ENCODE measurements at regions of chr2 and their contacts with region 1.

Region 1: GRCh38 chr2:31170071-31170698 is 31.9 kb upstream of the GALNT14 start:
- DNase-seq: peak; percentile 21
- ATAC-seq: peak; percentile 94
- H3K4me3 ChIP-seq: no peak overlapping the region
- H3K27ac ChIP-seq: no peak overlapping the region
- H3K4me1 ChIP-seq: no peaks in the 10 kb centered on the region
- H3K27me3 ChIP-seq: no peaks in the 10 kb centered on the region
- CTCF ChIP-seq: peak; percentile 93 to 97 (median 95)
- EP300 ChIP-seq: no peak
- POLR2A ChIP-seq: no peak
- RAD21 ChIP-seq: peak; percentile 85

Region 2: GRCh38 chr2:30862054-30862651 is 308.0 kb before region 1 on chr2:
- CTCF ChIA-PET with region 1: interaction called, 99 read pairs
- POLR2A ChIA-PET with region 1: no interaction called
- RAD21 ChIA-PET with region 1: interaction called, 61 read pairs
- SMC1A ChIA-PET with region 1: interaction called, 49 read pairs
- in situ Hi-C with region 1: loop called (anchors 10 kb)
- intact Hi-C with region 1: loop called (anchors 1 kb)
- DNase-seq: no peak
- ATAC-seq: peak; percentile 84
- H3K4me3 ChIP-seq: no peak overlapping the region
- H3K27ac ChIP-seq: no peak overlapping the region
- H3K4me1 ChIP-seq: peaks cover 14% of the 10 kb centered on the region
- H3K27me3 ChIP-seq: no peaks in the 10 kb centered on the region
- CTCF ChIP-seq: peak; percentile 72 to 92 (median 86)
- EP300 ChIP-seq: no peak
- POLR2A ChIP-seq: no peak
- RAD21 ChIP-seq: peak; percentile 72

Region 3: DNA sequence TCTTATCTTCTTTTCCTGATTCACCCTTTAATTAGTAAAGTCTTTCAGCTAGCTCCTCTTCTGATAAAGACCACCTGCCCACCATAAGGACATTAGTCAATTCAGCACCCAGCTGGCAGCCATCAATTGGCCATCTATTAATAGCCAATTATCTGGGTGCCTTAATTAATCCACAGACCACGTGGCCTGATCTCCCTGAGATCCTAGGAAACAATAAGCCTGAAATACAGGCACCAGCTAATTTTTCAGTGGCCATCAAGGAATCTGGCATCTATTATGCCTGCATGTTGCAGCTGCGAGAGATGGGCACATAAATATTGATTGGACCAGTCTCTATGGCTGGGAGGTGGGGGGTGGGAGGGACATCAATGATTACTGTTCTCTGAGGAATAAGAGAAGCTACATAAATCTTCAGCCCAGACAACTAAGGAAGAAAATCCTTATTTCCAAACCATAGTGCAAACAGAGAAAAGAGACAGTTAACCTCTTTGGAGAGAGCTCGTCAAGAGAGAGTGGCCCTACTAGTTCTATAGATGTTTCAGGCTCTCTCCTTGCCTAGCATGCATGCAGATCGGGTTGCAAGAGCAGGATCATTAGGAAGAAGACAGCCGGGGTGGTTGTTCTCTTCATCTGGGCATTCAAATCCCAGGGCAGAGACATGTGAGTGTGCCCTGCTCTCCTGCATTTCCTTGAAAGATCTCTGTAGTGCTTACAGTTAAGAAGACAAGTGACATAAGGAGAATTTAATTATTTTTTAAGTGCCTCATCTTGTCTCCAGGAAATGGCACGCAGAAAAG is 40.6 kb before region 1 on chr2:
- CTCF ChIA-PET with region 1: interaction called, 16 read pairs
- POLR2A ChIA-PET with region 1: no interaction called
- RAD21 ChIA-PET with region 1: interaction called, 3 read pairs
- SMC1A ChIA-PET with region 1: interaction called, 4 read pairs
- in situ Hi-C with region 1: no loop called
- intact Hi-C with region 1: no loop called
- DNase-seq: no peak
- ATAC-seq: no peak
- H3K4me3 ChIP-seq: no peak overlapping the region
- H3K27ac ChIP-seq: no peak overlapping the region
- H3K4me1 ChIP-seq: no peaks in the 10 kb centered on the region
- H3K27me3 ChIP-seq: no peaks in the 10 kb centered on the region
- CTCF ChIP-seq: no peak
- EP300 ChIP-seq: no peak
- POLR2A ChIP-seq: no peak
- RAD21 ChIP-seq: no peak

Region 4: GRCh38 chr2:31151501-31151900 is 18.7 kb before region 1 on chr2:
- CTCF ChIA-PET with region 1: interaction called, 11 read pairs
- POLR2A ChIA-PET with region 1: no interaction called
- RAD21 ChIA-PET with region 1: interaction called, 7 read pairs
- SMC1A ChIA-PET with region 1: interaction called, 10 read pairs
- in situ Hi-C with region 1: no loop called
- intact Hi-C with region 1: no loop called
- DNase-seq: no peak
- ATAC-seq: no peak
- H3K4me3 ChIP-seq: no peak overlapping the region
- H3K27ac ChIP-seq: no peak overlapping the region
- H3K4me1 ChIP-seq: no peaks in the 10 kb centered on the region
- H3K27me3 ChIP-seq: no peaks in the 10 kb centered on the region; a peak in 1 of 4 replicates
- CTCF ChIP-seq: 0 out of 6 replicates have a peak, but pooled peaks of 1 of the 3 experiments have one; percentile 4
- EP300 ChIP-seq: no peak
- POLR2A ChIP-seq: no peak
- RAD21 ChIP-seq: no peak

Region 5: DNA sequence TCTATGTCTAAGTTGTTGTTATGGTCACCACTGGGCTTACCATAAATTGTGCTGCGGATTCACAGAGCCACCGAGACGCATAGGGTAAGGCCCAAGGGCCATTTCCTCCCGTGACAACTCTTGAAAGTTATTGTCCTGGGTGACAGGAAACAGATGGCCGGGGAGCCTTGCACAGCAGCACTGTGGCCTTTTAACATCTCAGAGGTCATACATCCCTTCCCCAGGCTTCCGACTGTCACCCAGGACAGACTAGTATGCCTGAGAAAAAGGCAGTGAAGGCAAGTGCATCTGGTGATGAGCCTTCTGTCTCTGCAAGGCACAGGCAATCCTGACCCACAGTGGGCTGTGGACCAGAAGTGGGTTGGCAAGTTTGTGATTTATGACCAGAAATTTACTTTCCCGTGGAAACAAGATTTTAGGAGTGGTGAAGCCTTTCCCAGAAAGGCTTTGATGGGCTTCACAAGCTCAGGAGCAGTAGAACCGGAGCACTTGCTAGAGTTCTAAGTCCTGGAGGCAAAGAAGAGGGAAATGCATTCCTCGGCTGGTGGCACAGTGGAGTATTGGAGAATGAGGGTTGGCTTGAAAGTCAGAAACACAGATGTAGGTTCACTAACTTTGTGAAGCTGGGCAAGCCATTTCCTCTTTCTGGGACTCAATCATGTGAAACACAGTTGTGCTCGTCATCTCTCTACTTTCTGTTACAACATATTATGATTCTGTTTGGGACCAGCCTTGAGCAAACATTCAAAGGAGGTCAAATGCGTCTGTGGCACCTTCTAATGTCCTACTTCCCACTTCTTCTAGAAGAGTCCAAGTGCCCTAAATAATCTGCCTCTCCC is 49.2 kb after region 1 on chr2:
- CTCF ChIA-PET with region 1: interaction called, 11 read pairs
- POLR2A ChIA-PET with region 1: no interaction called
- RAD21 ChIA-PET with region 1: interaction called, 6 read pairs
- SMC1A ChIA-PET with region 1: interaction called, 11 read pairs
- in situ Hi-C with region 1: no loop called
- intact Hi-C with region 1: no loop called
- DNase-seq: peak; percentile 79
- ATAC-seq: peak; percentile 80
- H3K4me3 ChIP-seq: 0 out of 2 replicates have a peak overlapping the region, but pooled peaks have one; percentile 2
- H3K27ac ChIP-seq: peak overlapping the region; percentile 52
- H3K4me1 ChIP-seq: peaks cover 50% of the 10 kb centered on the region
- H3K27me3 ChIP-seq: no peaks in the 10 kb centered on the region
- CTCF ChIP-seq: no peak
- EP300 ChIP-seq: peak; percentile 28 to 48; a peak in 3 of 4 replicates
- POLR2A ChIP-seq: no peak
- RAD21 ChIP-seq: no peak

Region 6: DNA sequence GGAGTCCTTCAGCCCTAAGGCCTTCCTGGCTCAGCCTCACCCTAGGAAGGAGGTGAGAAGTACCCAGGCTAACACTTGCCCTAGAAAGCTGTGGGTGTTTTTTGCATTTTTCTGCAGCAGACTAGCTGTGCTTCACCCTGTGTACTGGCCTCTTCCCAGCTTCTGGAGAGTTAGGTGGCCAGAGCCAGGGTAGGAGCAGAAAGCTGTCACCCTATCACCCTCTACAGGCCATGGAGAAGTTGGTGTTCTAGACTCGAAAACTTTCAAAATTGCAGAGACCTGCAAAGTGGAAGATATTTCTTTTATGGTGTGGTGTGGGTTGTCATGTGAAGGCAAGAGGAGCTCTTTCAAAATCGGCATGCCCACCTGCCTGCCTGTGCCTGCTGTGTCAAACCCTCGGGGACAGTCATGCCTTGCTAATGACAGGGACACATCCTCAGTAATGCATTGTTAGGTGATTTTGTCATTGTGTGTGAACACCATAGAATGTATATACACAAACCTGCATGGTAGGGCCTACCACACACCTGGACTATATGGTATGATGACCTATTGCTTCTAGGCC is 93.5 kb after region 1 on chr2:
- CTCF ChIA-PET with region 1: interaction called, 17 read pairs
- POLR2A ChIA-PET with region 1: no interaction called
- RAD21 ChIA-PET with region 1: interaction called, 3 read pairs
- SMC1A ChIA-PET with region 1: no interaction called
- in situ Hi-C with region 1: no loop called
- intact Hi-C with region 1: loop called (anchors 5 kb)
- DNase-seq: no peak
- ATAC-seq: peak; percentile 68
- H3K4me3 ChIP-seq: no peak overlapping the region
- H3K27ac ChIP-seq: no peak overlapping the region
- H3K4me1 ChIP-seq: peaks cover 4% of the 10 kb centered on the region
- H3K27me3 ChIP-seq: no peaks in the 10 kb centered on the region; a peak in 1 of 4 replicates
- CTCF ChIP-seq: peak in 2 of 3 experiments; percentile 19 to 34; a peak in 3 of 6 replicates
- EP300 ChIP-seq: no peak
- POLR2A ChIP-seq: no peak
- RAD21 ChIP-seq: peak; percentile 39